AG04449 (cell line): ENCODE measurements at regions of chr1 and their contacts with region 1.

Region 1: GRCh38 chr1:11893907-11894251 is 32.3 kb downstream of the KIAA2013 start:
- DNase-seq: no peak
- H3K4me3 ChIP-seq: no peak overlapping the region
- CTCF ChIP-seq: peak; percentile 92

Region 2: DNA sequence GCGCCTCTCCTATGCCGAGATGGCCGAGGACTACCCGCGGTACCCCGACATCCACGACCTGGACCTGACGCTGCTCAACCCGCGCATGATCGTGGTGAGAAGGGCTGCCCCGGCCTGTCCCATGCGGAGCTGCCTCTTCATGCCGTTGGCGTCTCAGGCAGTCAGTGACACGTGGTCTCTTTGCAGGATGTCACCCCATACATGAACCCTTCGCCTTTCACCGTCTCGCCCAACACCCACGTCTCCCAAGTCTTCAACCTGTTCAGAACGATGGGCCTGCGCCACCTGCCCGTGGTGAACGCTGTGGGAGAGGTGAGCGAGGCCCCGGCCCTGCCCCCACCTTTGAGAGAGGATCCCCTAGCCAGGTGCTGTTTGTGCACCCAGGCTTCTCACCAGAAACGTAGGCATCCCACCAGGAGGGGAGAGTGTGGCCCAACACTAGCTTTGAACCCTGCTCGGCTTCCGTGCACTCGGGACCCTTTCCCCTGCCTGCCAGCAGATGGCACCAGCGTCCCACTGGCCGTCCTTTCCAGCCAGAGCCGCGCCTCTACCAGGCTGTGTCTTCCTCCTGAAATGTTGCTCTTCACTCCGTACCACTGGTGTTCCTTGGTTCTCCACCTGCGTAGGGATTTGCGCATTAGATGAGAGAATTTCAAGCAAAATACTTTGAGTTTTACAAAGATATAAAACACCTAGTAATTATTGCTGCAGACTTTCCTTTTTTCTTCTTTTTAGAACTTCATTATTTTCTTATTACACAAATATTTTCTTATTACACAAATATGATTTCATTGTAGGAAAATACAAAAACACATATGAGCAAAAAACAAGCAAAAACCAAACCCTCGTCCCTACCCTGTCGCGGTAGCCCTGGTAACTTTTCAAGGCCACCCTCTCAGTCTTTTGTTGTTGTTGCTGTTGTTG is 55.3 kb before region 1 on chr1:
- CTCF ChIA-PET with region 1: interaction called, 51 read pairs
- POLR2A ChIA-PET with region 1: no interaction called
- DNase-seq: no peak
- H3K4me3 ChIP-seq: no peak overlapping the region
- CTCF ChIP-seq: peak; percentile 99

Region 3: DNA sequence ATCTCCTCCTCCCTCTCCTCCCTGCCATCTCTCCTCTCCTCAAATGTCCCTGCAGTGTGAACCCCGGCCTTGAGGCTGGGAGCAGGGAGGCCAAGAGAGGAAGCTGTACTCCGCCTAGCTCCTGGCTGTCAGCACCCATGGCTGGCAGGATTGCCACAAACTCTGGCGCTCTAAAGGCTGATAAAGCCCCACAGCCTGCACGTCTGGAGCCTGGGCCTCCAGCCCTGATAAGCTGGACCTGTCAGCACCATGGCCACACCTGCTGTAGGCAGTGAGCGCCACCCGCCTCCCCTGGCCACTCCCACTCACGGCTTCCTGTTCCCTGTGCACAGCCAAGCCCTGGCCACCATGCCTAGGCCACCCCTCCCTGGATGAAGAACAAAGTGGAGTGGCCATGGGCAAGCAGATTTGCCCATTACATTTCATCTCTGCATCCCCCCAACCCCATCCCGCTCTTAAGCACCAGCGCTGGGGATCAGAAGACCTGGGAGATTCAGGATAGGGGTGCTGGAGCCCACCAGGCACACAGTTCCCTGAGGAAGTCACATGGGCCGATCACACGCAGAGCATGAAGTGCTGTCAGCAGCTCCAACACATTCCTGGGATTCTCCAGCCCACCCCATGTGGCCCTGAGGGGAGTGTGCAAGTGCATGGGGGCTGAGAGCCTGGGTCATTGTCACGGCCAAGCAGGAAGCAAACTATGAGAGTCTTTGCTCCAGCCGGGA is 10.9 kb before region 1 on chr1:
- CTCF ChIA-PET with region 1: interaction called, 10 read pairs
- POLR2A ChIA-PET with region 1: no interaction called
- DNase-seq: no peak
- H3K4me3 ChIP-seq: no peak overlapping the region
- CTCF ChIP-seq: no peak